Activated CD8-positive, alpha-beta memory T cell treated with anti-CD3 and anti-CD28 coated beads, Interleukin-2, amount 10 ng/mL, durations not matched to agents 7 days and 5 days (primary cell): ENCODE measurements at regions of chr4 and their contacts with region 1.

Region 1: DNA sequence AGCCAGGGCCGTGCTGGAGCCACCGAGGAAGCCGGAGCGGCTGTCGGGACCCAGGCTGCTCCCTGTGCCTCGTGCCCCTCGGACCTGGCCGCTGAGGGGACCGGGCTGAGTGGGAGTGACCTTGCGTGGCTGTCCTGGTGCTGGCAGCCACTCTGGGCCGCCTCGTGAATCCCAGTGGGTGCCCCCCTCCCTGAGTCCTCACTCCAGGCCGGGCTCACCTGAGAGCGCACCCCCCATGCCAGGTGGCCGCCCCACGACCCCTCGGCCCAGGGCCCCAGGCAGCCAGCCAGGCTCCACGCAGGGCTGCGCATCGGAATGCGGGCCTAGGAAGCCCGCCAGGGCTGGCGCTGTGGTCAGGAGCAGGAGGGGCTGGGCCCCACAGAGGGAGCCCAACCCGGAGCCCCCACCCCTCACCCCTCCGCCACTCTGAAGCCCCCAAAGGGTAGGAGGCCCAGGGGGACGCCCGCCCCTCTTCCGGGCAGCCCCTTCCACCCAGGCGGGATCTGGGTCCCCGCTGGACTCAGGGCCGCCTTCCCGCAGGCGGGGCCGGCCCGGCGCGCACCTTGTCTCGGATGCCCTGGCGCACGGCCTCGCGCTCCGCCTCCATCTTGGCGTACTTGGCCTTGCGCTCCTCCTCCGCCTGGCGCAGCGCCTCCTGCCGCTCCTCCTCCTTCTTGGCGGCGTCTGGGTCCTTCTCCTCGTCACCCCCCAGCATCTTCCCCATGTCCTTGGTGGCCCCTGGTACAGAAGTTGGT is 33.9 kb downstream of the CPLX1 start:
- DNase-seq: peak; percentile 57
- ATAC-seq: peak; percentile 68
- H3K4me3 Mint-ChIP-seq: peak overlapping the region; percentile 52
- H3K27ac Mint-ChIP-seq: no peak overlapping the region
- H3K4me1 Mint-ChIP-seq: peaks cover 30% of the 10 kb centered on the region
- H3K27me3 Mint-ChIP-seq: peaks cover 49% of the 10 kb centered on the region

Region 2: DNA sequence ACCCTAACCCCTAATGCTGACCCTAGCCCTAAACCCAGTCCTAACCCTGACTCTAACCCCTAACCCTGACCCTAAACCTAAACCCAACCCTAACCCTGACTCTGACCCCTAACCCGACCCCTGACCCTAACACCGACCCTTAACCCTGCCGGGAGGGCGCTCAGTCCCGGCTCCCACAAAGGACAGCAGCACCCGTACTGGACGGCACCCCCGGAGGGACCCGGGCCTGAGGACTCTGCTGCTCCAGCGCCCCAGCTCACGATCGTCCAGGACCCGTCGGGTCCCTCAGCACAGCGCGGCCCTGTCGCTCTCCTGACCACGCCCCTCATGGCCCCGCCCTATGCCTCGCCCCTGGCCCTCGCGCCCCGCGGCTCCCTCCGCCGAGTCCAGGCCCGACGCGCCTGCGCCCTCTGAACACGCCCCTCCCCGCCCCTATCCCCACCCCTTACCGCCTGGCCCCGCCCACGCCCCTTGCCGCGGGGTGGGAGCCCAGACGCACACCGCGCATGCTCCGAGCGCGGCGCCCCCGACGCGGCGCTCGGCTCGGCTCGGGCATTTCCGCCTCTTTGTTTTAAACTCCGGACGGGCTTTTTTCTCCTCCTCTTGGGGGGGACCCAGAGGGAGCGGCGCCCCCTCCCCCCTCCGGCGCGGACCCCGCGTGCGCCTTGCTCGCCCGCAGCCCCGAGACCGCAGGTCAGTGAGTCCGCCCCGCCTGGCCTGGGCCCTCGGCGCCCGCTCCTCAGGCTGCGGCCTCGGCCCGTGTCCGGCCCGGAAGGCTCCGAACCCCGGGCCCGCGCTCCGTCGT is 86.6 kb before region 1 on chr4 and contains the start of gene PCGF3:
- CTCF ChIA-PET with region 1: no interaction called
- DNase-seq: peak; percentile 97
- ATAC-seq: peak; percentile 97
- H3K4me3 Mint-ChIP-seq: peak within 1 kb of the TSS; percentile 70
- H3K27ac Mint-ChIP-seq: peak within 1 kb of the TSS; percentile 71
- H3K4me1 Mint-ChIP-seq: peaks cover 14% of the 10 kb centered on the region
- H3K27me3 Mint-ChIP-seq: no peaks in the 10 kb centered on the region
- total RNA-seq, gene PCGF3: 38.9 to 49.0 TPM

Region 3: DNA sequence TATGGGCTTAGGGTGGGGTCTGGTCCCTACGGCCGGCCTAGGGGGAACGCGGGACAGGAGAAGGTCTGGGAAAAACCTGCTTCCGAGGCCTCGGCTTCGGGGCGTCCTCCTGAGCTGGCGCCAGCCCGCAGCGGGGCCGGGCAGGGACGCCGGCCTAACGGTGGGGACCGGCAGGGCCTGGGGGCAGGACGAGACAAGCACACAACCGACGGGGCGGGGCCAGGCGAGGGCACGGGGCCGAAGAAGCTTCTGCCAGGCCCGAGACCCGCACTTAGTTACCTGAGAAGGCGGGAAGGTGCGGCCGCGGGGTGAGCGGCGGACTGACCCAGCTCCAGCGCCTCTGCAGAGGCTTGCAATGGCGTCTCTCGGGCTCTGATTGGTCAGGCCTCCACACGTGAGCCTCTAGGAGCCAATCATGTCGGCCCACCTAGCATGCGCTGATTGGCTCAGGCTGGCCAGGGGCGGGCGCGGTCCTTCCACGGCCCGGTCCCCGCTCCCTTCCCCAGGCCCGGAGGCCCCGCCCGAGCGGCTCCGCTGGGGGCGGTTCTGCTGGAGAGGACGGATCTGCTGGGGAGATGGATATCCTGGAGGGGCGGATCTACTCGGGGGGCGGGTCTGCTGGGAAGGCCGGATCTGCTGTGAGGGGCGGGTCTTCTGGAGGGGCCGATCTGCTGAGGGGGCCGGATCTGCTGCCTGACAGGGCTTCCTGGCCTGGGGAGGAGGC is 10.4 kb before region 1 on chr4:
- CTCF ChIA-PET with region 1: interaction called, 11 read pairs
- DNase-seq: peak; percentile 100
- ATAC-seq: peak; percentile 95
- H3K4me3 Mint-ChIP-seq: peak overlapping the region; percentile 79
- H3K27ac Mint-ChIP-seq: peak overlapping the region; percentile 82
- H3K4me1 Mint-ChIP-seq: peaks cover 48% of the 10 kb centered on the region
- H3K27me3 Mint-ChIP-seq: peaks cover 17% of the 10 kb centered on the region

Region 4: GRCh38 chr4:813900-814299 is 21.9 kb after region 1 on chr4:
- CTCF ChIA-PET with region 1: no interaction called
- DNase-seq: no peak
- ATAC-seq: no peak
- H3K4me3 Mint-ChIP-seq: no peak overlapping the region
- H3K27ac Mint-ChIP-seq: no peak overlapping the region
- H3K4me1 Mint-ChIP-seq: no peaks in the 10 kb centered on the region
- H3K27me3 Mint-ChIP-seq: peaks cover 47% of the 10 kb centered on the region